Mammary epithelial cell (primary cell): ENCODE measurements at regions of chr4 and their contacts with region 1.

Region 1: GRCh38 chr4:2220016-2220630 is 21.8 kb downstream of the HAUS3 start:
- DNase-seq: peak; percentile 58
- H3K4me3 ChIP-seq: no peak overlapping the region
- H3K27ac ChIP-seq: no peak overlapping the region
- H3K4me1 ChIP-seq: peaks cover 13% of the 10 kb centered on the region
- H3K27me3 ChIP-seq: peaks cover 19% of the 10 kb centered on the region
- CTCF ChIP-seq: peak; percentile 96

Region 2: DNA sequence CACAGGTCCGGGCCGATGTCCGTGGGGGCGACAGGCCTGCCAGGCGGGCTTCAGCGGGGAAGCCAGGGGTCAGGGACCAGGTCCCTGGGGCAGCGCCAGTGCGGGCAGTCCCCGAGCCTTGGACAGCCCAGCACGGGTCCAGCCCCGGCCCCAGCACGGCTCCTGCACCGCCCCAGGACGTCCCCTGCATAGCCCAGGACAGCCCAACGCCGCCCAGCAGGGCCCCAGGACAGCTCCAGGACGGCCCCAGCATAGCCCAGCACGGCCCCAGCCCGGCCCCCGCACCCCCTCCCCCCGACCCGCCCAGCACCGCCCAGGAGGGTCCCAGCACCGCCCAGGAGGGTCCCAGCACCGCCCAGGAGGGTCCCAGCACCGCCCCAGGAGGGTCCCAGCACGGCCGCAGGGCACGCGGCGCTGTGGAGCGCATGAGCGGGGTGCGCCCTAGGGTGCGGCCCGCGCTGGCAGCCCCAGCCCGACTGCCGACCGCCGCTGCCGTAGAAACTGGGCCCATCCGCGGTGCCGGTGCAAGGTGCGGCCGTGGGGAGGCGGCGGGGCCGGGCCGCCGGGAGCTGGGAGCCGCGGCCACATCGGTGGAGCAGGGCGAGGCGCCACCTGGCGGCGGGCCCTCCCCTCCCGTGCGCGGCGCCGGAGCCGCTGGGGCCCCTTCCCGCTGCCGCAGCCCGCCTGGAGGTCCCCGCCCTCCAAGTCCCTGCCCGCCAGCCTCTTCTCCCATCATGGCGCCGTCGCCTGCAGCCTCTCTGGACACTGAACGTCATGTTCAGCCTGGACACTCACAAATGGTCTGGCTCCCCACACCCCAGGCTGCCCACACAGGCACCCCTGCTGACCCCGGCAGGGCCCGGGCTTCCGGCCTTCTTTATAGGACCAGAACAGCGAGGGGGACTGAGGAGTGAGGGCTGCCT is 707.1 kb before region 1 on chr4:
- CTCF ChIA-PET with region 1: no interaction called
- dilution Hi-C with region 1: no loop called
- in situ Hi-C with region 1: no loop called
- intact Hi-C with region 1: no loop called
- DNase-seq: no peak
- H3K4me3 ChIP-seq: no peak overlapping the region
- H3K27ac ChIP-seq: no peak overlapping the region
- H3K4me1 ChIP-seq: no peaks in the 10 kb centered on the region
- H3K27me3 ChIP-seq: no peaks in the 10 kb centered on the region
- CTCF ChIP-seq: peak; percentile 35 to 45

Region 3: GRCh38 chr4:1533401-1534064 is 686.6 kb before region 1 on chr4:
- CTCF ChIA-PET with region 1: no interaction called
- dilution Hi-C with region 1: no loop called
- in situ Hi-C with region 1: no loop called
- intact Hi-C with region 1: no loop called
- DNase-seq: no peak
- H3K4me3 ChIP-seq: no peak overlapping the region
- H3K27ac ChIP-seq: no peak overlapping the region
- H3K4me1 ChIP-seq: no peaks in the 10 kb centered on the region
- H3K27me3 ChIP-seq: no peaks in the 10 kb centered on the region
- CTCF ChIP-seq: no peak

Region 4: DNA sequence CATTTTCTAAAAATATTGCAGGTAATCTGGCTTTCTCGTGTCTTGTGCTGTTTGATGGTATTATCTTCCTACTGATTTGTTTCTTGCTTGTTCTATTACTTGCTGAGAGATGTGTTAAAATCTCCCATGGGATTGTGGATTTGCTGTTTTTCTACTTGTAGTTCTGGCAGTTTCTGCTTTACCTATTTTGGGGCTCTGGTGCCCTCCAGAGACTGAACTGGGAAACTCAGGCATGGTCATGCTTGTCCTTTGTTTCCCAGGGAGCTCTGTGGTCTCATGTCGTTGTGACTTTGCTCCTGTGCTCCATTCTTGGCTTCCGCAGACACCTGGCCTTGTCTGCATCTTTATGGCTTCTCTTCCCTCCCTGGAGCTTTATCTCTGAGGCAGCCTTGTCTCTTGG is 309.5 kb before region 1 on chr4:
- CTCF ChIA-PET with region 1: no interaction called
- dilution Hi-C with region 1: no loop called
- in situ Hi-C with region 1: no loop called
- intact Hi-C with region 1: no loop called
- DNase-seq: peak; percentile 29
- H3K4me3 ChIP-seq: no peak overlapping the region
- H3K27ac ChIP-seq: no peak overlapping the region
- H3K4me1 ChIP-seq: peaks cover 15% of the 10 kb centered on the region
- H3K27me3 ChIP-seq: no peaks in the 10 kb centered on the region
- CTCF ChIP-seq: peak; percentile 57 to 76

Region 5: DNA sequence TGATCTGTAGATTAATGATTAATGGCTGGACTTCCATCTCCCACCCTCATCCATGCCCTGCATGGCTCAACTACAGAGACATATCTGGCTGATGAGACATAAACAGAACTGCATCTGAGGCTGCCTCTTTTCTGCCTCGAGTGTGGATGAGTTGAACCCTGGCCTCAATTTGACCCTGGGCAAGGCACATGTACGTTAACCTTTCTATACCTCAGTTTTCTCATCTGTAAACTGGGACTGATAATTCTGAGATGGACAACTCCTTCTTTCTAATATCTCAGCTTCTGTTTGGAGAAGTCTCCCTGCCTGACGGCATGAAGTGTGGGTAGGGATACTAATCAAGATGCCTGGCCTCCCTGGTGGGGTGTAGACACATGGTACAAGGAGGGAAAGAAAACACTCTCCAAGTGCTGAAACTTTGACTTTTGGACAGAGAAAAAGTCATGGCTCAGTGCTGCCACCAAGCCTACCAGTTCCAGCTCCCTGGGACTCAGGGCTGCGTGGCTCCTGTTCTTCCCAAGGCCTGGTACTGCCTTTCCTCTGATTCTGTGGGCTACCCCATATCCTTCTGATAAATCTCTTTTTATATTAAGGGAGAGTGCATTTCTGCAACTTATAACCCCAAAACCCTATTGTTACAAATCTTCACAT is 42.6 kb before region 1 on chr4:
- CTCF ChIA-PET with region 1: no interaction called
- dilution Hi-C with region 1: no loop called
- in situ Hi-C with region 1: no loop called
- intact Hi-C with region 1: no loop called
- DNase-seq: no peak
- H3K4me3 ChIP-seq: no peak overlapping the region
- H3K27ac ChIP-seq: no peak overlapping the region
- H3K4me1 ChIP-seq: no peaks in the 10 kb centered on the region
- H3K27me3 ChIP-seq: peaks cover 1% of the 10 kb centered on the region
- CTCF ChIP-seq: peak; percentile 21 to 28

Region 6: DNA sequence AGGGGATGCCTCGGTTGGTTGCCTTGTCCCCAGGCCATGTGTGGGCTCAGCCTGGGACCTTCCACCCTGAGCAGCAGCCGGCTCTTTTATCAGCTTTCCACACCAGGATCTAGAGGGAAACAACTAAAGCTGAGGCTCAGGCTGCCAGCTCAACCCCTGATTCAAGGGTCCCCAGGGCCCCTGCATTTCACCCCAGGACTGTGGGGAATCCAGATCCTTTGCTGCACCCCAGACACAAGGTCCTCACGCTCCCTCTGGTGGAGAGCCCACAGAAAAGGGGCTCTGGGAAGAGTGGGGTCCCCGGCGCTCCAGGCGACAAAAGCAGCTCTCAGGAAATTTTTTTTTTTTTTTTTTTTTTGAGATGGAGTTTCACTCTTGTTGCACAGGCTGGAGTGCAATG is 134.0 kb after region 1 on chr4:
- CTCF ChIA-PET with region 1: no interaction called
- dilution Hi-C with region 1: no loop called
- in situ Hi-C with region 1: no loop called
- intact Hi-C with region 1: loop called (anchors 1 kb)
- DNase-seq: no peak
- H3K4me3 ChIP-seq: no peak overlapping the region
- H3K27ac ChIP-seq: no peak overlapping the region
- H3K4me1 ChIP-seq: no peaks in the 10 kb centered on the region
- H3K27me3 ChIP-seq: no peaks in the 10 kb centered on the region
- CTCF ChIP-seq: peak in 1 of 2 donors; percentile 27

Region 7: GRCh38 chr4:2436301-2436700 is 216.2 kb after region 1 on chr4:
- CTCF ChIA-PET with region 1: no interaction called
- dilution Hi-C with region 1: no loop called
- in situ Hi-C with region 1: loop called in 1 of 2 experiments (anchors 10 kb)
- intact Hi-C with region 1: loop called (anchors 1 kb)
- DNase-seq: peak; percentile 11
- H3K4me3 ChIP-seq: no peak overlapping the region
- H3K27ac ChIP-seq: no peak overlapping the region
- H3K4me1 ChIP-seq: no peaks in the 10 kb centered on the region
- H3K27me3 ChIP-seq: peaks cover 13% of the 10 kb centered on the region
- CTCF ChIP-seq: peak in 1 of 2 donors; percentile 29

Region 8: DNA sequence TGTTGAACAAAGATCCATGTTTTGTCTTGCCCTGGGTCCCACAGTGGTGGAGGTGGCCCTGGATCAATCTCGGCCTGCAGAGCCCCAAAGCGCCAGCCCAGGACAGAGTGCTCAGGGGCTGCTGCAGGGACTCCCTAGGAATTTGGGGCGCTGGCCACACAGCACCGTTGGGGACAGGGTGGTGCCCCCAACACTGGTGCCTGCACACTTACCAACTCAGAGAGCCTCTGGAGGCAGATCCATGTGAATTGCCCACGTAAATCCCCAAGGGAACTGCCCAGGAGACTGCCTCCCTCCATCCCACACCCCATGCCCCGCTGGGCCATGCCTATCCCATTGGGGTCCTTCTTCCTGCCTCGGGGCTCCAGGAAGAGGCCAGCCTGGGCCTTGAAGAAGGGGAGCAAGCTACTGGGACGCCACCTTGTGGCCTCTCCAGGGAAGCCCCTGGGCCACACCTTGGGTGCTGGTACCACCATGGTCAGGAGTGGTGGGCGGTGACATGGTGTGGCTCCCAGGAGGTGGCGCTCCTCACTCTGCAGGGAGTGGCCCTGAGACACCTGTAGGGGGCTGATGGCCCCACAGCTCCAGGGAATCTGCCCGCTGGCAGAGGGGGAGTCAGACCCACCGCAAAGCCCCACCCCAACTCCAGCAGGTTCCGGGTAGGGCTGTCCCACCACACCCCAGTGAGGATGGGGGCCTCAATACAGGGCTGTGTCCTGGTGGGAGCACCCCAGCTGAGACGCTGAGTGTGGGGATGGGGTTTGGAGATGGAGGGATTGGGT is 221.5 kb after region 1 on chr4:
- CTCF ChIA-PET with region 1: no interaction called
- dilution Hi-C with region 1: no loop called
- in situ Hi-C with region 1: loop called in 1 of 2 experiments (anchors 10 kb)
- intact Hi-C with region 1: loop called (anchors 1 kb)
- DNase-seq: peak; percentile 27
- H3K4me3 ChIP-seq: no peak overlapping the region
- H3K27ac ChIP-seq: no peak overlapping the region
- H3K4me1 ChIP-seq: no peaks in the 10 kb centered on the region
- H3K27me3 ChIP-seq: peaks cover 5% of the 10 kb centered on the region
- CTCF ChIP-seq: peak; percentile 61 to 71

Region 9: DNA sequence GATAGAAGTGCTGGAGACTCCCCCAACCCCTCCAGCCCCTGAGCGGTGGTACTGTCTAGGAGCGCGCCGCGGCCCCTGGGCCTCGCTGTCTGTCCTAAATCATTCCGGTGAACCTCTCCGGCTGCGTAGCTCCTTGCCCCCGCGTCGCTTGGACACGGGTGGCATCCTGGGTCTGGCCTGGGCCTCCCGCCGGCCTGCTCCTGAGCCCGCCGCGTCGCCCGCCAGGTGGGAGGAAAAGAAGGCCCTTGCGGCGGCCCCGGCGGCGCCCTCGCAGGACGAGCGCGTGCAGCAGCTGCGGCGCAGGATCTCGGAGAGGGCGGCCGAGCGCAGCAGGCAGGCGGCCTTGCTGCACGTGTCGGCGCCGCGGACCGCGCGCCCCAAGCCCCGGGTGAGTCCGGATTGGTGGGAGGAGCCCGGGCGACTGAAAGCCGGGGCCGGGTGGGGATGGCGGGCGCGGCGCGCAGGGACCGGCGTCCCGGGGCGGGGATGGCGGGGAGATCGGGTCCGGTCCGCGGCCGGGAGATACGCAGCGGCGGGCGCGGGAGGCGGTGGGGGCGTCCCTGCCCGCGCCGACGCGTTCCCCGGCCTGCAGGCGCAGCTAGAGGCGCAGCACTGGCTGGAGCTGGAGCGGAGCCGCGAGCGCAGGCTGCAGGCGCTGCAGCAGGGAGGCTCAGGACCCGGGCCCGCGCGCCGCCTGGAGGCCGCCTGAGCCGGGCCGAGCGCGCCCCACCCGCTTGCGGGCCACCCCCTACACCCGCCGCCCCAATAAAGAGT is 242.3 kb after region 1 on chr4:
- CTCF ChIA-PET with region 1: no interaction called
- dilution Hi-C with region 1: no loop called
- in situ Hi-C with region 1: loop called in 1 of 2 experiments (anchors 25 kb)
- intact Hi-C with region 1: loop called (anchors 1 kb)
- DNase-seq: peak; percentile 39
- H3K4me3 ChIP-seq: peak overlapping the region; percentile 17 to 47 (median 36)
- H3K27ac ChIP-seq: no peak overlapping the region
- H3K4me1 ChIP-seq: peaks cover 4% of the 10 kb centered on the region
- H3K27me3 ChIP-seq: no peaks in the 10 kb centered on the region
- CTCF ChIP-seq: no peak